Activated CD8-positive, alpha-beta T cell treated with anti-CD3 and anti-CD28 coated beads for 36 hours (primary cell): ENCODE measurements at regions of chr11 and their contacts with region 1.

Region 1: GRCh38 chr11:9748361-9748970 is 84.6 kb downstream of the SWAP70 start:
- DNase-seq: peak; percentile 79
- ATAC-seq: peak; percentile 98
- H3K4me3 Mint-ChIP-seq: no peak overlapping the region
- H3K27ac Mint-ChIP-seq: no peak overlapping the region
- H3K4me1 Mint-ChIP-seq: peaks cover 14% of the 10 kb centered on the region
- H3K27me3 Mint-ChIP-seq: no peaks in the 10 kb centered on the region
- CTCF ChIP-seq: peak; percentile 82

Region 2: DNA sequence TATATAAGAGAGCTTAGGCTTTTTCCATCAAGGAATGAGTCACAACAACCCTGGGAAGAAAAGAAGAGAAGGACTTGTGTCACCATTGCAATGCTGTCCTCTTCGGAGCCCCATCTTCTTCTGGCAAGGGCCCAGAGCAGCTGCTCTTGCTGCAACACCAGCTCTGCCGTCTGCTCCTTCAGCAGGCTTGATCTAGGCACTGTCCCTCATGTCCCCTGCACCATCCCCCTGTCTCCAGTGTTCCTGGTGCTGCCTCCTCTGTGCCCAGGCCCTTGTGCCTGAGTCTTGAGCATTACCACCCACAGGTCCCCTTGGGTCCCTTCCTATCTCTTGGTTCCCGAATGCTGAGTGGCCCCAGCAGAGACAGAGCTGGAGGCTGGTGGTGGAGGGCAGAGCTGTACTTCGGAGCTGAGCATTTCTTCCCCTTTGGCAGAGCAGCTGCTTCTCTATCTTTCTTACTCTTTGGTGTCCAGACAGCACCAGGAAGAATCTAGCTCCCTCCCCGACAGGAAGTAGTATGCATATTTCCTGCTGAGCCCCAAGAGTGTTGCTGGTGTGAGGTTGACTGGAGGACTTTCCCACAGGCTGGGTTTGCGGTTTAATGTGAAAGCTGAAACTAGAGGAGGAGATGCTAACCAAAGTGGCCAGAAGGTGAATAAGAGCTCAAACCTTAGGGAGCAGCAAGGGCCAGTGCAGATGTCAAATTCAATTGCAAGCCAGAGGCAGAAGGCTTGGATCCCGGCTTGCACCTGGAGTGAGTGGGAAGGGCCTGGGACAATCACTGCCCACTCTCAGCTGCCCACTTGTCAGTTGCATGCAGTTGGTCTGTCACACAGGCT is 147.2 kb before region 1 on chr11:
- CTCF ChIA-PET with region 1: interaction called, 16 read pairs
- POLR2A ChIA-PET with region 1: interaction called, 3 read pairs
- intact Hi-C with region 1: no loop called
- DNase-seq: peak; percentile 92
- ATAC-seq: peak; percentile 87
- H3K4me3 Mint-ChIP-seq: peak overlapping the region; percentile 60
- H3K27ac Mint-ChIP-seq: peak overlapping the region; percentile 87
- H3K4me1 Mint-ChIP-seq: peaks cover 31% of the 10 kb centered on the region
- H3K27me3 Mint-ChIP-seq: peaks cover 3% of the 10 kb centered on the region
- CTCF ChIP-seq: no peak

Region 3: GRCh38 chr11:9732453-9732852 is 16.0 kb before region 1 on chr11:
- CTCF ChIA-PET with region 1: interaction called, 21 read pairs
- POLR2A ChIA-PET with region 1: interaction called, 3 read pairs
- intact Hi-C with region 1: no loop called
- DNase-seq: no peak
- ATAC-seq: no peak
- H3K4me3 Mint-ChIP-seq: no peak overlapping the region
- H3K27ac Mint-ChIP-seq: no peak overlapping the region
- H3K4me1 Mint-ChIP-seq: no peaks in the 10 kb centered on the region
- H3K27me3 Mint-ChIP-seq: no peaks in the 10 kb centered on the region
- CTCF ChIP-seq: no peak

Region 4: DNA sequence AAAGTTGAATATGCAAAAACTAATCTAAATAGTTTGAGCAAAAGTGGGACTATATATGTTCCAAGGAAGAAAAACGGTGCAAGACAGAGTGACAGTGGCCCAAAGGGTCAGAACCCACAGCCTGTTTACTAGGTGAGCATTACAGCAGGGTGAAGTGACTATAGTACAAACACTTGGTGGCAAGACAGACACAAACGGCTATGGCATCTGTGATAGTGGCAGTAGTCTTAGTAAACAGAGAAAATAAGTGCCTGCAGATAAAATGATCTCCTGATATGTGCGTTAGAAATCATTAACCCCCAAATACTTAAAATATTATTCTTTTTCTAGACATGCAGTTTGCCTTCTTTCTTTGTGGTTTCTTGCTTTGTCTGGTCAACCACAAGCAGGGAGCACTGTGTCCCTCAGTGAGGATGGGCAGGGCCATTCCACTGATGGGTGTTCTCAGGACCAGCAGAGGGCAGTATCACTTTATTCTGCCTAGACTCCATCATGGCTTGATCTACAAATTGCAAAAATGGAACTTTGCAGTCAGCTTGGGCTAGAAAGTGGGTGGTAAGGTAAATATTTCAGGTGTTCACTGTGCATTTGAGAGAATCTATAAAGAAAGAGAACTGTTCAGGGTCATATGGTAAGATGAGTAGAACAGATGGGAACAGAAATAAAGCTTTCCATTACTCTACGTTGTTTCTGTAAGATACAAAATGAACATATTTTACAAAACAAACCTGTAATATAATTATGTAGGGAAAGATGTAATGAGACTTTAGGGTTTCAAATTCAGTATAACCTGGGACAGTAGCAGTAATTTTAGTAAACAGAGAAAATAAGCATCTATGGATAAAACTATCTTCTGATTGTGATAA is 113.6 kb after region 1 on chr11:
- CTCF ChIA-PET with region 1: no interaction called
- POLR2A ChIA-PET with region 1: no interaction called
- intact Hi-C with region 1: loop called (anchors 2 kb)
- DNase-seq: peak; percentile 70
- ATAC-seq: peak; percentile 68
- H3K4me3 Mint-ChIP-seq: no peak overlapping the region
- H3K27ac Mint-ChIP-seq: no peak overlapping the region
- H3K4me1 Mint-ChIP-seq: peaks cover 35% of the 10 kb centered on the region
- H3K27me3 Mint-ChIP-seq: no peaks in the 10 kb centered on the region
- CTCF ChIP-seq: peak; percentile 86